ENCODE measurements at regions of chr12 and their contacts with region 1.

Region 1: DNA sequence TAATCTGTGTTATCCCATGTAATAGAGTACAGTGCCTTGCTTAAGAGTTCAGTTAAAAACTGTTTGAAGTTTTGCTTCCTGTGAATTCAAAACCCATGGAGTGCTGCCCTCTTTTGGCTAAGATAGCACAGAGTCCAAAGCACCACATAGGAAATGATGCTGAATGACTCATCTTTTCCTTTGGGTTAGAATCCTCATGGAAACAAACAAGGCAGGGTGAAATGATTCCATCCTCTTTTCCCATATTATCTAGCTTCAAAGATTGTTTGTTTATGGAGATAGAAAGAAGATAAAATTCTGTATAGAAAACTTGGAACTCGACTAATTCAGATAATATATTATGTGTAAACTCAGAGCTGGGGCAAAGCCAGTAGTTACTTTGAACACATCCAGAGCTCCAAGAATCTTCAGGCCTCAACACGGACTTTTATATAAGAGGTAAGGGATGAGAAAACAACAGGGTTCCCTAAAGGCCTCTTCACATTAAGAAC is 87.4 kb downstream of the OTOGL start:
- ATAC-seq: peak; percentile 65 to 98 (median 90)
- H3K4me3 ChIP-seq: no peak overlapping the region
- H3K27ac ChIP-seq: no peak overlapping the region
- H3K4me1 ChIP-seq: no peaks in the 10 kb centered on the region

Region 2: GRCh38 chr12:79555028-79555930 is 631.5 kb before region 1 on chr12:
- in situ Hi-C with region 1: loop called in 3 of 9 experiments (anchors 25 kb)
- ATAC-seq: peak in 4 of 8 experiments; percentile 22 to 62 (median 56)
- H3K4me3 ChIP-seq: no peak overlapping the region
- H3K27ac ChIP-seq: no peak overlapping the region
- H3K4me1 ChIP-seq: peaks cover 0 to 3% of the 10 kb centered on the region in 2 donors

Region 3: GRCh38 chr12:79891506-79892162 is 295.1 kb before region 1 on chr12:
- in situ Hi-C with region 1: no loop called
- ATAC-seq: no peak
- H3K4me3 ChIP-seq: no peak overlapping the region
- H3K27ac ChIP-seq: no peak overlapping the region
- H3K4me1 ChIP-seq: no peaks in the 10 kb centered on the region

Region 4: GRCh38 chr12:79911889-79912656 is 274.7 kb before region 1 on chr12:
- in situ Hi-C with region 1: loop called in 1 of 9 experiments (anchors 25 kb)
- ATAC-seq: peak in 3 of 8 experiments; percentile 14 to 44 (median 23)
- H3K4me3 ChIP-seq: no peak overlapping the region
- H3K27ac ChIP-seq: no peak overlapping the region
- H3K4me1 ChIP-seq: no peaks in the 10 kb centered on the region

Region 5: DNA sequence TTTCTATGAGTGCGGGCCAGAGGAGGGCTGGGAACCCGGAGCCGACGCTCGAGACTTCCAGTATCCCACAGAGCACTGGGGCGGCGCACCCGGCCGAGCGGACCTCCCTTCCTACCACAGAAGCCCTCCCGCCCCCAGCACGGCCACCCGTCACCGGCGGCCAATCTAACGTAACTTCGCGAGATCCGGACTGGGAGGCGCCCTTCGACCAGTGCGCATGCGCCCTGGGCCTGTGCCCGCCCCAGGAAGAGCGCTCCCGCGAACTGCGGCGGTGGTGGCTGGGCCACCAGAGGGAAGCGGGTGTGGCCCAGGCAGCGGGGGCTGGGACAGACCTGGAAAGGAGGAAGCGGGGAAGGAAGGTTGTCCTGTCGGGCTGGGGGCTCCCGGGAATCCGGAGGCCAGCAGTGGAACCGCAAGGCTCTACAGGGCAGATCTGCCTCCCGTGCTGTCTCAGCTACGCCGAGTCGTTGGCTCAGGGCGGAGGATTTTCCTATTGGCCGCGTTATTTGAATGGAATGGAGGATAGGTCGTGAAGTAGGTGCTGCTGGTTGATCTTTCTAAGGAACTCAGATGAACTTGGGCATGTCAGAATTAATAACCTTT is 251.7 kb before region 1 on chr12 and contains the start of gene PPP1R12A:
- in situ Hi-C with region 1: loop called in 2 of 9 experiments (anchors 10 to 25 kb)
- ATAC-seq: peak; percentile 89 to 95 (median 94)
- H3K4me3 ChIP-seq: peak within 1 kb of the TSS; percentile 69 to 80 (median 72)
- H3K27ac ChIP-seq: peak within 1 kb of the TSS; percentile 93 to 95
- H3K4me1 ChIP-seq: peaks cover 0 to 23% of the 10 kb centered on the region in 2 donors
- total RNA-seq, gene PPP1R12A: 49.0 to 164 (median 68.2) TPM